ENCODE measurements at regions of chr14 and their contacts with region 1.

Region 1: GRCh38 chr14:22986508-22987054 is 4.2 kb upstream of the AJUBA start:
- DNase-seq: peak; percentile 85
- CTCF ChIP-seq: peak; percentile 93

Region 2: DNA sequence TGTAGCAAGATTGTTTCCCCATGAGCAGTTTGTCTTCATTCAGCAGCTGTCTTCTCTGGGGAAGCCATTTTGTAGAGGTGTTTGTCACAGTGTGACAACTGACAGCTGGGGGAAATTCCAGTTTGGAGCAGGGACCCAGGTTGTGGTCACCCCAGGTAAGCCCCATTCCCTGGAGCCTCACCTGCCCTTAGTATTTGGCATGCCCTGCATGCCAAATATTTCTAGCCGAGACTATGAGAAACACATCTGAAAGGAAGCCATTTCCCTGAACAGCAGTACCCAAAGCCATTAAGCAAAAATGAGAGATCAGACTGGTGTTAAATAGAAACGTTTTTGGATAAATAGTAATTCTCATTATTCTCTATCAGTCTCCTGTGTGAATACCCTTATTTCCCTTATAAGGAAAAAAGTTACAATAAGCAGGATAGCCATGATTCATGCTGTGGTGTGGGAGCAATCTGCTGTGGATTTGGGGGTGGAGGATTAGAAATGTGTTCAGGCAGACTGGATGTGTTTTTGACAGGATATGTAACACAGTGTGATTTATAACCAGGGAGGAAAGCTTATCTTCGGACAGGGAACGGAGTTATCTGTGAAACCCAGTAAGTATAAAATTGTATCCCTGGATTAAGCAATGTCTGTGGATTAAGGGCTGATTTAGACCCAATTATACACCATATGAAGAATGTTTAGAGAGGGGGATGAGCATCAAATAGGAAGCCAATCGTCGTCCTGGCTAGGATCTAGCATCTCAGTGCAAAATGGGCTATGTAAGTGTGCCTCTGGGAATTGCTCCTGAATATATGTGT is 466.5 kb before region 1 on chr14:
- CTCF ChIA-PET with region 1: no interaction called
- POLR2A ChIA-PET with region 1: no interaction called
- DNase-seq: no peak
- CTCF ChIP-seq: no peak

Region 3: GRCh38 chr14:22955702-22956569 is 30.6 kb before region 1 on chr14:
- CTCF ChIA-PET with region 1: interaction called, 46 read pairs
- POLR2A ChIA-PET with region 1: interaction called, 3 read pairs
- DNase-seq: no peak
- CTCF ChIP-seq: no peak

Region 4: DNA sequence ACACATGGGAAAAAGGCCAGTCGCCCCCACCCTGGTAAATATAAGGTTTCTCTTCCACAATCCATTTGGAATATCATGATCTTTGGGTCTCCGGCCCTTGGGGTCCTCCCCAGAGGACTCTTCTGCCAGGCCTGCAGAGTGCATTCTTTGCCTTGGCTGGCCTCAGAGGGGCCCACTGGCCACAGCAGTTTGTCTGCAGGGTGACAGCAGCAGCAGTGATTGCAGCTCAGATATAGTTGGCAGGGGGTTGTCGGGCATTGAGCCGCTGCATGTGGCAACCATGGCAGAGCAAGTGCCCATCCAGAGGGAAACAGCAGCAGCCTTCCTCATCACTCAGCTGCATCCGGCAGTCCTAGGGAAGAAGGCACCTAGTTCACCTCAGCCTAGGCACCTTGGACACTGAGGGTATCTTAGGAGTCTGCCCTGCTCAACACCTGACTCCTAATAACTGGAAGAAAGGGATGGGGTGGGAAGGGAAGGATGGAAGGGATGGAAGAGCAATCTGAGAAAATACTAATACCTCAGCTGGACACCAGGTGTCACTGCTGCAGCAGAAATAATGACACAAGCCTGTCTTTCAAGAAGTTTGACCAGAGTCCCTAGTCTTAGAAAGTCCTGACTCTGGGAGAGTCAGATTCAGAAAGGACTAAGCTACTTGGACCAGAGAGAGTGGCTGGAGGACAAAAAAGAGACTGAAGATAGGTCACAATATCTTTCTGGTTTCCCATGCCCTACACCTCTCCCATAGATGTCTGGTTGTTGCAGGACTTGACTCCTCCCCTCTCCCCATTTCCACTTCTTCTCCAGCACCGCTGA is 13.2 kb before region 1 on chr14:
- CTCF ChIA-PET with region 1: interaction called, 270 read pairs
- POLR2A ChIA-PET with region 1: interaction called, 3 read pairs
- DNase-seq: peak; percentile 63
- CTCF ChIP-seq: peak; percentile 80

Region 5: DNA sequence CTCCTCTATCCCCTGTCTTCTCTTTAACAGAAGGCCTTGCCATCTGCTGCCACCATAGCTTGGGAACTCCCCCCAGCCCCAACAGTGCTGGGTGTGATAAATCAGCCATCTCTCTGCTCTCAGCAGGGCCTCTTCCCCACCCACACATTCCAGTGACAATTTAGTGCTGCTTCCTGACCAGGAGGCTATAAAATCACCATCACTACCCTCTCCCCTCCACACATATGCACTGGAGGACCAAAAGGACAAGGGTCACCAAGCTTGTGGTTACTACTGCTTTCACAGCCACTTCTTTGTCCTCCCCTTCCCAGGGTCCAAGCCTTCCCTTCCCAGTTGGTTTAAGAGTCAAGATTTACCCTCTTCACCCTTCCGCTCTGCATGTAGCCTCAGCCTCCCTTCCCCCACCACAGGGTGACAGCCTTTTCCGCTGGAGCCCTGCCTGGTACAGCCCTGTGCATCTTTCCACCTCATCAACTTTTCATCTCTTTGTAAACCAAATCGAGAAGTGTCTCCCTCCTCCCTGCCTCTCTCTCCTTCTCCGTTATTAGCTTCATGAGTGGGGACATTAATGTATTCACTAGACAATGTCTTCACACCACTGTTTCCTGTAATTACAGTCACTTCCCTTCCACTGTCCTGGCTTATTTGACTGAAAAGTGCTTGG is 38.7 kb after region 1 on chr14:
- CTCF ChIA-PET with region 1: interaction called, 19 read pairs
- POLR2A ChIA-PET with region 1: no interaction called
- DNase-seq: no peak
- CTCF ChIP-seq: no peak

Region 6: GRCh38 chr14:23041729-23042128 is 55.1 kb after region 1 on chr14:
- CTCF ChIA-PET with region 1: interaction called, 834 read pairs
- POLR2A ChIA-PET with region 1: no interaction called
- DNase-seq: no peak
- CTCF ChIP-seq: no peak

Region 7: DNA sequence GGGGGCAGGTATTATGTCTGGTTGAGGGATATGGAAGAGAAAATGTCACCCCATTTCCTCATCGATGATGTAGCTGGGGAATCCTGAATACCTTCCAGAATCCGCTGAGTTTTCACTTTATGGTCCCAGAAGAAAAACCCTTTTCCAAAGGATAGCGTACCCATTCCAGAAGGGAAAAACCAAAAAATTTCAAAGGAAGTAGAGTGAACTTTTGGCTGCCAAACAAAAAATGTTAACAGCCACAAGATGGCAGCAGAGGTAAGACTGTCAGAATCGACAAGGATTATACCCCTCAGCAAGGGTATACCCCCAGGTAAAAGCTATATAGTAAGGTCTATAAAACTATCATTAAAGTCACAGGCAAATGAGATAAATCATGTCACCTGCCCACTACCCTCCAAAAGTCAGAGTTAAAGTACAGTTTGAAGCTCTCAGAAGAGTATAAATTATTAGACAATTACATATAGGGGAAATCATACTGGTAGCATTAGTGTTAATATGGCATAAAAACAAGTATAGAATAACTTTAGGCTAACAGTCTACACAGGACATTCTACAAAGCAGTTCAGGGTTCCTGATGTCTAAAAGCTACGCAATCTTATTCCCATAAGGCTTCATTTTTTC is 90.3 kb after region 1 on chr14:
- CTCF ChIA-PET with region 1: interaction called, 24 read pairs
- POLR2A ChIA-PET with region 1: no interaction called
- DNase-seq: no peak
- CTCF ChIP-seq: peak; percentile 47